ENCODE measurements at regions of chr18 and their contacts with region 1.

Region 1: DNA sequence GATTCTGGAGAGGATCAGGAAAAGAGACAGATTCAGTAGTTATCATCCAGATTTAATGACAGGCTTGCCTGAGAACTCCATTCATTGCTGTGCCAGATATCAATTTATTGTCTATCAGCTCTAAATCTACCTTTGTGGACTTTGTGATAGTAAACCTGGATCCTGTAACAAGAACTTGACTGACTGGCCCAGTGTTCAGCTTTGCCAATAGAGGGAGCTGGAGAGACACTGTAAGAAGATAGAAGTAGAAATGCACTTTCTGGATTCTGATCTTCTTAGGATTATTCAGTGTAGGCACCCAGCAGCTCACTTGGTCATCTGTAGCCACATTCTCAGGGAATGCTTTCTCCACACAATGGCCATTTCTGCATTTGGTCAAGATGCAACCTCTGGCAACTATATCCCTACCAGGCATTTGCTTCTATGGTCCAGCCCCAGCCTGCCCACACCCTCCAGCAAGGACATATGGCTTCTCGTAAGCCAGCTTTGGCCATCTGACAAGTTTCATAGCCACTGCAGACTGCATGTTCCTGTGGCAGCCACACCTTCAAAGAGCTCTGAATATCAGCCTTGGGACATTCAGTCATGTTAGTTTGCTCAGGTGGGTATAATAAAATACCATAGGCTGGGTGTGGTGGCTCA is 6.1 kb upstream of the SERPINB8 start:
- DNase-seq: peak in 4 of 5 donors; percentile 23 to 69 (median 53)
- H3K4me3 ChIP-seq: no peak overlapping the region
- H3K4me3 Mint-ChIP-seq: no peak overlapping the region
- H3K27ac ChIP-seq: no peak overlapping the region
- H3K27ac Mint-ChIP-seq: peak overlapping the region in 1 of 8 donors; percentile 3
- H3K4me1 ChIP-seq: no peaks in the 10 kb centered on the region
- H3K4me1 Mint-ChIP-seq: peaks cover 0 to 6% (median 2%) of the 10 kb centered on the region in 3 donors
- H3K27me3 ChIP-seq: no peaks in the 10 kb centered on the region
- H3K27me3 Mint-ChIP-seq: peaks cover 0 to 27% of the 10 kb centered on the region in 2 donors

Region 2: GRCh38 chr18:63848159-63848558 is 115.6 kb before region 1 on chr18:
- CTCF ChIA-PET with region 1: no interaction called
- POLR2A ChIA-PET with region 1: no interaction called
- DNase-seq: no peak
- H3K4me3 ChIP-seq: no peak overlapping the region
- H3K4me3 Mint-ChIP-seq: no peak overlapping the region
- H3K27ac ChIP-seq: no peak overlapping the region
- H3K27ac Mint-ChIP-seq: no peak overlapping the region
- H3K4me1 ChIP-seq: no peaks in the 10 kb centered on the region
- H3K4me1 Mint-ChIP-seq: no peaks in the 10 kb centered on the region
- H3K27me3 ChIP-seq: no peaks in the 10 kb centered on the region
- H3K27me3 Mint-ChIP-seq: peaks cover 1 to 18% of the 10 kb centered on the region in 2 donors

Region 3: GRCh38 chr18:63975628-63976027 is 11.9 kb after region 1 on chr18:
- CTCF ChIA-PET with region 1: interaction called, 12 read pairs
- POLR2A ChIA-PET with region 1: no interaction called
- DNase-seq: no peak
- H3K4me3 ChIP-seq: no peak overlapping the region
- H3K4me3 Mint-ChIP-seq: no peak overlapping the region
- H3K27ac ChIP-seq: no peak overlapping the region
- H3K27ac Mint-ChIP-seq: peak overlapping the region in 1 of 8 donors; percentile 34
- H3K4me1 ChIP-seq: peaks cover 7% of the 10 kb centered on the region
- H3K4me1 Mint-ChIP-seq: peaks cover 24 to 35% (median 27%) of the 10 kb centered on the region in 3 donors
- H3K27me3 ChIP-seq: no peaks in the 10 kb centered on the region
- H3K27me3 Mint-ChIP-seq: peaks cover 0 to 1% of the 10 kb centered on the region in 2 donors

Region 4: GRCh38 chr18:63994783-63995399 is 31.2 kb after region 1 on chr18:
- CTCF ChIA-PET with region 1: interaction called, 21 read pairs
- POLR2A ChIA-PET with region 1: no interaction called
- DNase-seq: peak in 4 of 5 donors; percentile 16 to 30 (median 24)
- H3K4me3 ChIP-seq: no peak overlapping the region
- H3K4me3 Mint-ChIP-seq: peak overlapping the region in 1 of 7 donors; percentile 23
- H3K27ac ChIP-seq: no peak overlapping the region
- H3K27ac Mint-ChIP-seq: no peak overlapping the region
- H3K4me1 ChIP-seq: no peaks in the 10 kb centered on the region
- H3K4me1 Mint-ChIP-seq: peaks cover 0 to 5% (median 5%) of the 10 kb centered on the region in 3 donors
- H3K27me3 ChIP-seq: no peaks in the 10 kb centered on the region
- H3K27me3 Mint-ChIP-seq: peaks cover 0 to 7% of the 10 kb centered on the region in 2 donors

Measured in CD8-positive, alpha-beta memory T cell (primary cell).